Activated naive CD4-positive, alpha-beta T cell treated with anti-CD3 and anti-CD28 coated beads for 36 hours (primary cell): ENCODE measurements at regions of chr17 and their contacts with region 1.

Region 1: GRCh38 chr17:5281814-5282653 is at the start of gene RABEP1:
- DNase-seq: peak; percentile 94
- H3K4me3 Mint-ChIP-seq: peak within 1 kb of the TSS; percentile 91
- H3K27ac Mint-ChIP-seq: peak within 1 kb of the TSS; percentile 88
- H3K4me1 Mint-ChIP-seq: peaks cover 38% of the 10 kb centered on the region
- H3K27me3 Mint-ChIP-seq: no peaks in the 10 kb centered on the region
- total RNA-seq, gene RABEP1: 57.9 to 59.3 TPM

Region 2: DNA sequence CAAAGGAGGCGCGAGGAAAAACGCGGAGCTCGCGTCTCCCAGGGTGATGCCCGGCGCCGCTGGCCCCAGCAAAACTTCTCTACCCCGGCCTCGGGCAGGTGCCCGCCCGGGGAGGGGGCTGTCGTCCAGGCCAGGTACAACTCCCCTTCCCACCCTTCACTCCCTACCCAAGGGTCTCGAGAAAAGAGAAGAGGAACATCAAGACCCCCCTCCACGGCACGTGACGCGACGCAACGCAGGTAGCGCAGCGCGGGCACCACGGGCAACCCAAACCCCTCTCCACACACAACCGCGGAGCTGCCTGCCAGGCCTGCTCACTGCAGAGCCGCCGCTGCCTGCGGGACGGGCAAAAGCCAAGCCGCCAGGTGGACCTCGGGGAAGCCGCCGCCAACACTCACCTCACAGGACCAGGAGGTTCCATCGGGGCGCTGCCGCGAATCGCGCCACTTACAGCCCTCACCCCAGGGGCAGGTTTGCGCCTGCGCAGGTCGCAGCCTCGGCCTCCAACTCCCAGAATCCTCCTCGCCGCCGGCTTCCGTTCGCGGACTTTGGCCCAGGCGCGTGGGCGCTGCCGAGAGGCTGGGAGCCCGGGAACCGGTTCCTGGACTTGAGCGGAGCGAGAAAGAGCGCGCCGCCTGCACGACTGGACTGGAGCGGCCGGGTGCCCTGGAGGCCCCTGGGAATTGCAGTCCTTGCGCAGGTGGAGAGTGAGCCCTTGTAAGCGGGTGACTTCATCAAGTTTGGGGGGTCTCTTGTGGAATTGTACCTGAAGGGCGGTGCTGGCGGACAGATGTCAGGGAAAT is 170.4 kb before region 1 on chr17 and contains the start of gene ZNF232:
- CTCF ChIA-PET with region 1: no interaction called
- intact Hi-C with region 1: loop called (anchors 5 kb)
- DNase-seq: peak; percentile 95
- H3K4me3 Mint-ChIP-seq: peak within 1 kb of the TSS; percentile 89
- H3K27ac Mint-ChIP-seq: peak within 1 kb of the TSS; percentile 81
- H3K4me1 Mint-ChIP-seq: peaks cover 27% of the 10 kb centered on the region
- H3K27me3 Mint-ChIP-seq: peaks cover 16% of the 10 kb centered on the region
- total RNA-seq, gene ZNF232: 9.1 to 9.5 TPM

Region 3: DNA sequence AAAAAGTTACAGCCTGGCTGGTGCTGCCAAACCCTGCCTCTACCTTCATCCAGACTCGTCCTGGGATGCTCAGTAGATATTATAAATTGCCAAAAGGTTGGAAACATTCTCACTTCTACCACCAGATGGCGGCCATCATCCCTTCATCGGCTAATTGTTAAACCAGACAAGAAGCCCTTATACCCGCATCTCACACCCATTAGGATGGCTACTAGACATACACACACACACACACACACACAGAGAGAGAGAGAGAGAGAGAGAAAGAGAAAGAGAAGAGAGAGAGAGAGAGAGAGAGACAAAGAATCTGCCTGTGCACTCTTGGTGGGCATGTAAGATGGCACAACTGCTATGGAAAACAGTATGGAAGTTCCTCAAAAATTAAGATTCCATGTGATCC is 32.4 kb before region 1 on chr17:
- CTCF ChIA-PET with region 1: no interaction called
- intact Hi-C with region 1: loop called (anchors 5 kb)
- DNase-seq: peak; percentile 85
- H3K4me3 Mint-ChIP-seq: no peak overlapping the region
- H3K27ac Mint-ChIP-seq: no peak overlapping the region
- H3K4me1 Mint-ChIP-seq: peaks cover 8% of the 10 kb centered on the region
- H3K27me3 Mint-ChIP-seq: no peaks in the 10 kb centered on the region

Region 4: DNA sequence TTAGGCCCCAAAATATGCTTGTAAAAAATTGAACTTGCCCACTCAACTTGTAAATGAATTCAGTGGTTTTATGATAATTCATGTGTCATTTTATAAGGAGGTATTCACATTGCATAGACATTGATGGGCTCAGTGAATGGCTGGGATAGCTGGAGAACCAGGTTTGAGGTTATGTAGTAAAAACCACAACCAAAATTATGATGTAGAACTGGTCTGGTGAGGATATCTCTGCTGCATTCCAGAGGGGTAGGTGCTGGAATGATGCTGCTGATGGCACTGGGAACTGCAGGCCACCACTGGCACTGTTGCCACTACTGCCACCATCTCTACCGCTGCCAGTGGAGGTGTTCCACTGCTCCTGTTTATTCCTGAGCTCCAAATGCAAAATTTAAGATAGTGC is 21.5 kb before region 1 on chr17:
- CTCF ChIA-PET with region 1: no interaction called
- intact Hi-C with region 1: no loop called
- DNase-seq: no peak
- H3K4me3 Mint-ChIP-seq: no peak overlapping the region
- H3K27ac Mint-ChIP-seq: no peak overlapping the region
- H3K4me1 Mint-ChIP-seq: no peaks in the 10 kb centered on the region
- H3K27me3 Mint-ChIP-seq: no peaks in the 10 kb centered on the region

Region 5: DNA sequence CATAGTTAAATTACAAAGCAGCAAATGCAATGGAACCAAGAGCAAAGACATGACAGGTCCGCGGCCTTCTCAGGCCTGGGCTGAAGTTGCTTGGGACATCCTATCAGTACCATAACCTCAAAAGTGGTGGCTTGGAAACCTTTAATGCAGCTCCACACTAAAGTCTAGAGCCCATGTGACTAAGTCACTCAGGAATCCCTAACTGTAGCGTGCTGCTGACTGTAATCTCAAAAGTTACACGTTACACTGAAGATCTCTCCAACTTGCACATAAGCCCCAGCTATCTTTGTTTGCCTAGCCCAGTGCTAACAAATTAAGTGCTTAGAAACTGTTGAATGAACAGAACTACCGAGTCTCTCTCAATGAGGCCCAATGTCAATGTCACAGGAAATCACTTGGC is 109.6 kb after region 1 on chr17:
- CTCF ChIA-PET with region 1: no interaction called
- intact Hi-C with region 1: no loop called
- DNase-seq: no peak
- H3K4me3 Mint-ChIP-seq: no peak overlapping the region
- H3K27ac Mint-ChIP-seq: no peak overlapping the region
- H3K4me1 Mint-ChIP-seq: peaks cover 9% of the 10 kb centered on the region
- H3K27me3 Mint-ChIP-seq: no peaks in the 10 kb centered on the region

Region 6: DNA sequence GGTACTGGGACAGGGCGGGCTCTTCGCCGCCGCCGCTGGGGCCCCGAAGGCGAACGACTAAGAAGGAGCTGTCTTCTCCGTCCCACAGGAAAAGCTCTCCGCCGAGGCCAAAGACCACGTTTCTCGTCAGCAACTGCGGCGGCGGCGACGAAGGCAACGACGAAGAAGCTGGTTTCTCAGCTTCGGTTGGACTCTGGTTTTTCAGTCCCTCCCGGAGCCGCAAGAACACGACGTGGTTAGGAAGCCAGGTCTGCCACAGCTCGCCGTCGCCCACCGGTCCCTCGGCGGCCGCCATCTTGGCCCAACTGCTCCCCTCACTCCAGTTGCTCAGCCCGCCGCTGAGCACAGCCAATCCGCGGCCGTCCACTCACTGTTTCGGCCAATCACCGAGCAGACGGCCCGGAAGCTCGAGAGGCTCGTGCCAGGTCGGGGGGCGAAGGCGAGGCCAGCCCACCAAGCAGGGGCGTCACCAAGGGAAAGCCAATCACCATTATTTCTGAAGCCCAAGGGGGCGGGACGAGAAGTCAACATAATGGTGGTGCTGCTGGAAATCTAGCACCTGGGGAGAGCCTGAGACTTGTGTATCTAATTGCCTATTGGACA is 137.4 kb after region 1 on chr17 and contains the start of gene NUP88:
- CTCF ChIA-PET with region 1: no interaction called
- intact Hi-C with region 1: loop called (anchors 1 kb)
- DNase-seq: peak; percentile 97
- H3K4me3 Mint-ChIP-seq: peak within 1 kb of the TSS; percentile 100
- H3K27ac Mint-ChIP-seq: peak within 1 kb of the TSS; percentile 100
- H3K4me1 Mint-ChIP-seq: peaks cover 50% of the 10 kb centered on the region
- H3K27me3 Mint-ChIP-seq: no peaks in the 10 kb centered on the region
- total RNA-seq, gene NUP88: 115 to 131 TPM